Vagina (tissue), 2 donors: ENCODE measurements at regions of chr1 and their contacts with region 1.

Region 1: GRCh38 chr1:167442124-167442848 is 76.0 kb downstream of the CD247 start:
- DNase-seq: peak; percentile 84 to 87
- H3K4me3 ChIP-seq: no peak overlapping the region
- H3K27ac ChIP-seq: no peak overlapping the region
- H3K4me1 ChIP-seq: peaks cover 16% of the 10 kb centered on the region
- H3K27me3 ChIP-seq: no peaks in the 10 kb centered on the region
- CTCF ChIP-seq: peak; percentile 76 to 87 (median 85)
- POLR2A ChIP-seq: no peak

Region 2: DNA sequence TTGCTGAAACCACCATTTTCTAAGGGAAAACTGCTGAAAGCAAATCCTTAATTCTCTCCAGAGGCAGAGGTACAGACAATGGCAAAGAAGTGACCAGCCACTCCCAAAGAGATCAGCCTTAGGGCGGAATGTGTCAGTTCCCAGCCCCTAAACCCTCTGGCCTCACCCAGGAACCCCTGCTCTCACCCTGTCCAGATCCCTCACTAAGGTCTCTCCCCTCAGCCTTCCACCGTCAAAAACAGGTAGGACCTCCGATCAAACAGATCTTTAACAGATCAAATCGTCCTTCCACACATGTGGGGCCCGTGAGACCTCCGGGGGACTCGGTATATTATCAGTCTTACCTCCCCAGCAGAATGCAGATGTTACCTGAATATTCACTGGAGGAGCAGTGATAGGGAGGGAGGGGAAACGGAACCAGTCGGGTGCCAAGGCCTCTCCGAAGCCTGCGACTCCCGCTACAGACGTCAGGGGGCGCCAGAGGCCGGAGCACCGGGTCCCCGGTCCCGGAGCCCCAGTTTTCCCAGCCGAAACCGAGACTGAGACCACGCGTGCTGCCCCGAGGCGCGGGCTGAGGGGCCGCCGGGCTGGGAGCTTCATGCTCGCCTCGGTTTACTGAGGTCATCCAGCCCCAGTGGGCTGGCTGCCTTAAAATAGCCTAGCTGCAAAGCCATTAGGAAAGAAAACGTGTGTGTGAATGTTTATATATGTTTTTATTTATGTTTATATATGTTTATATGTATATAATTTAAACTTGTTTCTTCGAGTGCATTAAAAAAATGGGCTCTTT is 375.8 kb before region 1 on chr1:
- intact Hi-C with region 1: loop called (anchors 5 kb)
- DNase-seq: no peak
- H3K4me3 ChIP-seq: no peak overlapping the region
- H3K27ac ChIP-seq: no peak overlapping the region
- H3K4me1 ChIP-seq: peaks cover 7% of the 10 kb centered on the region
- H3K27me3 ChIP-seq: no peaks in the 10 kb centered on the region
- CTCF ChIP-seq: peak; percentile 79 to 96 (median 90)
- POLR2A ChIP-seq: no peak

Region 3: GRCh38 chr1:167268398-167268787 is 173.9 kb before region 1 on chr1:
- intact Hi-C with region 1: loop called (anchors 5 kb)
- DNase-seq: no peak
- H3K4me3 ChIP-seq: no peak overlapping the region
- H3K27ac ChIP-seq: no peak overlapping the region
- H3K4me1 ChIP-seq: peaks cover 14% of the 10 kb centered on the region
- H3K27me3 ChIP-seq: no peaks in the 10 kb centered on the region
- CTCF ChIP-seq: no peak
- POLR2A ChIP-seq: no peak

Region 4: DNA sequence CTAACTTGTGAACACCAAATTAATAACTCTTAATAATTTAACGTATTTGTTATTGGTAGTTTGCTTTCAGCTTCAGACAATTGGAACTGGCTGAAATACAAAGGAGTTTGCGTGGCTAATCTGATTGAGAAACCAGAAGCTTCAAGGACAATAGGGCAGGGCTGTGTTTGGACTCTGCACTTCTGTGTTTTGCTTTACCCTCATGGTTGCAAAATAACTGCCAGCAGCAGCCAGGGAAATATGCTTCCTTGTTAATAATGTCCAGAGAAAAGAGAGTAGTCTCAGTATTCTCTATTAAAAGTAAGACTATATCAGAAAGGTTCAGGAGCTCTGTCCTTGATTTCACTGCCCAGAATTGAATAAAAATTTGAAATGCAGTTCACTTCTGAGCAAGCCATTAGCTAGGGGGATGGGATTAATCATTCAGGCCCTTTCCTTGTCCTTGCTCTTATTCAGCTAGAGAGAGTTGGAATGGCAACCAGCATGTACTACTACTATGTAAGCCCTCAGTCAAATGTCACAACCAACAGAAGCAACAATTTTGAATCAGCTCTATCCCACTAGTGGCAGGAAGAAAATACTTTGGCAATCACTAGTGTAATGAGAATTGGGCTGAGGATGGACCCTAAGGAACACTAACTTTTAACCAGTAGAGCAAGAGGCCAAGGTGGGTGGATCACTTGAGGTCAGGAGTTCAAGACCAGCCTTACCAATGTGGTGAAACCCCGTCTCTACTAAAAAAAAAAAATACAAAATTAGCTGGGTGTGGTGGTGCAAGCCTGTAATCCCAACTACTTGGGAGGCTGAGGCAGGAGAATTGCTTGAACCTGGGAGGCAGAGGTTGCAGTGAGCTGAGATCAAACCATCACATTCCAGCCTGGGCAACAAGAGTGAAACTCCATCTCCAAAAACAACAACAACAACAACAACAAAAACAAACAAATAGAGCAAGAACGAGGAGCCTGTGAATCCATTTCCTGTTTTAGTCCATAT is 144.8 kb before region 1 on chr1:
- intact Hi-C with region 1: no loop called
- DNase-seq: no peak
- H3K4me3 ChIP-seq: no peak overlapping the region
- H3K27ac ChIP-seq: no peak overlapping the region
- H3K4me1 ChIP-seq: peaks cover 17% of the 10 kb centered on the region
- H3K27me3 ChIP-seq: no peaks in the 10 kb centered on the region
- CTCF ChIP-seq: no peak
- POLR2A ChIP-seq: no peak

Region 5: GRCh38 chr1:167819849-167820683 is 377.8 kb after region 1 on chr1:
- intact Hi-C with region 1: no loop called
- DNase-seq: no peak
- H3K4me3 ChIP-seq: peak overlapping the region; percentile 36 to 42
- H3K27ac ChIP-seq: peak overlapping the region; percentile 72
- H3K4me1 ChIP-seq: no peaks in the 10 kb centered on the region
- H3K27me3 ChIP-seq: no peaks in the 10 kb centered on the region
- CTCF ChIP-seq: no peak
- POLR2A ChIP-seq: no peak